Naive thymus-derived CD4-positive, alpha-beta T cell (primary cell): ENCODE measurements at regions of chr1 and their contacts with region 1.

Region 1: GRCh38 chr1:43763497-43763973 is 56.2 kb downstream of the ST3GAL3 start:
- DNase-seq: peak; percentile 13 to 54 (median 45)
- ATAC-seq: peak; percentile 82
- H3K4me3 ChIP-seq: no peak overlapping the region
- H3K4me3 Mint-ChIP-seq: no peak overlapping the region
- H3K27ac ChIP-seq: no peak overlapping the region
- H3K27ac Mint-ChIP-seq: no peak overlapping the region
- H3K4me1 ChIP-seq: no peaks in the 10 kb centered on the region
- H3K4me1 Mint-ChIP-seq: peaks cover 0 to 12% (median 4%) of the 10 kb centered on the region in 7 donors
- H3K27me3 ChIP-seq: no peaks in the 10 kb centered on the region
- H3K27me3 Mint-ChIP-seq: no peaks in the 10 kb centered on the region

Region 2: GRCh38 chr1:43934101-43934985 is 170.8 kb after region 1 on chr1:
- CTCF ChIA-PET with region 1: interaction called, 50 read pairs
- POLR2A ChIA-PET with region 1: no interaction called
- intact Hi-C with region 1: loop called (anchors 1 kb)
- DNase-seq: peak in 6 of 9 donors; percentile 29 to 68 (median 44)
- ATAC-seq: peak; percentile 82
- H3K4me3 ChIP-seq: no peak overlapping the region
- H3K4me3 Mint-ChIP-seq: peak overlapping the region in 8 of 10 donors; percentile 12 to 70 (median 46)
- H3K27ac ChIP-seq: no peak overlapping the region
- H3K27ac Mint-ChIP-seq: no peak overlapping the region
- H3K4me1 ChIP-seq: peaks cover 0 to 9% of the 10 kb centered on the region in 2 donors
- H3K4me1 Mint-ChIP-seq: peaks cover 10 to 29% (median 14%) of the 10 kb centered on the region in 7 donors
- H3K27me3 ChIP-seq: peaks cover 9 to 19% of the 10 kb centered on the region in 2 donors
- H3K27me3 Mint-ChIP-seq: peaks cover 21 to 29% (median 26%) of the 10 kb centered on the region in 5 donors

Region 3: DNA sequence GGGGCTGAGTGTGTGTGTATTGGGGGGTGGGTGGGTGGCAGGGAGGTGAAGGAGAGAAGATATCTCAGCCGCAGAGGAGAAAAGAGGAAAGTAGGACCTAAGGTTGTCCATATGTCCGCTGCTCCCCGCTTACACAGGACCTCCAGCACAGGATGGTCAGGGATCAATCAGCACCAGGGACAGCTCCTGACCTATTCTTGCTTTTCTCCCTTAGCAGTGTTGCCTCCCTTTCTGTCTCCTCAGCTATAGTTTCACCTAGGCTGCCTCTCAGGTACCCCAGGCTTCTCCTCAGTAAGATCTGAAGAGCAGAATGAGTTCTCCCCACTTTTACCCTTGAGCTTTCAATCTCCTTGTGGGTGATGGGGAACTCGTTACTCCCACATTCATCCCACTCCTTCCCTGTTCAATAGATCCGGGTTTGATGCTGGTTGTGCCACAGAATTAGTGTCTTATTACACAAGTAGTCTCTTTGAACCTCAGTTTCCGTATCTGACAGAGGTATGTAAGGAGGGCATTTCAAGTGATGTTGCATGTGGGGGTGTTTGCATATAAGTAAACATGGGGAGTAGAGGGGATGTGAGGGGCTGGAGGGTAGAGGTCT is 204.9 kb after region 1 on chr1:
- CTCF ChIA-PET with region 1: no interaction called
- POLR2A ChIA-PET with region 1: no interaction called
- intact Hi-C with region 1: loop called in 1 of 2 experiments (anchors 1 kb)
- DNase-seq: no peak
- ATAC-seq: no peak
- H3K4me3 ChIP-seq: no peak overlapping the region
- H3K4me3 Mint-ChIP-seq: no peak overlapping the region
- H3K27ac ChIP-seq: no peak overlapping the region
- H3K27ac Mint-ChIP-seq: peak overlapping the region in 1 of 9 donors; percentile 26
- H3K4me1 ChIP-seq: peaks cover 9 to 15% of the 10 kb centered on the region in 2 donors
- H3K4me1 Mint-ChIP-seq: peaks cover 15 to 31% (median 24%) of the 10 kb centered on the region in 7 donors
- H3K27me3 ChIP-seq: no peaks in the 10 kb centered on the region
- H3K27me3 Mint-ChIP-seq: no peaks in the 10 kb centered on the region

Region 4: DNA sequence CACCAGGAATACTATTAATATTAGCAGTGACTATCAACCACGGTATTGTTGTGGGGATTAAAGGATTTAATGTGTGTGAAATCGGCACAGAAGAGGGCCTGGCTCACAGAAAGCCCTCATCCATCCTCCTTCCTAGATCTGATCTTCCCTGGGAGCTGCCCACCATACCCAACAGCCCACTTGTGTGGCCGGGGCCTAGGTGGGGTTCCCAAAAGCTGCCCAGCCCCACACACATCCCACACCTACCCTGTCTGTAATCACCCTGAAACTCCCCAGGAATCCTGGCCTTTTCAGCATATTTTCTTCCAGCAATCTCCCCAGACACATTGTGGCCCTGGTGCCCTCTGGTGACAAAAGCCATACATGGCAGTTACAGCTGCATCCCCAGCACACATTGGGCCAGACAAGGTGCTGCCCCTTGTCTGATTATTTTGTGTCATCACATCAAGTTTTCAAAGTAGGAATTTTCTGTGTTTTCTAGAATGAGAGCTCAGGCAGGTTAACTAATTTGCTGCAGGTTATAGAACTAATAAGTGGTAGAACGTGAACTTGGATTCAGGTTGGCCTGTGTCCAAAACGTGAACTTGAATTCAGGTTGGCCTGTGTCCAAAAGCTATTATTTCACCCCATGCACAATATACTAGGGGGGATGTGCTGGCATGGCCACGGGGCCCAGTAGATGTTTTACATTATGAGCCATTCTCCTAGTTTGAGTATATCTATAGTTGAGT is 273.0 kb after region 1 on chr1:
- CTCF ChIA-PET with region 1: interaction called, 4 read pairs
- POLR2A ChIA-PET with region 1: no interaction called
- intact Hi-C with region 1: loop called in 1 of 2 experiments (anchors 1 kb)
- DNase-seq: peak; percentile 32 to 71 (median 58)
- ATAC-seq: peak; percentile 88
- H3K4me3 ChIP-seq: no peak overlapping the region
- H3K4me3 Mint-ChIP-seq: peak overlapping the region in 1 of 10 donors; percentile 1
- H3K27ac ChIP-seq: no peak overlapping the region
- H3K27ac Mint-ChIP-seq: peak overlapping the region in 1 of 9 donors; percentile 18
- H3K4me1 ChIP-seq: no peaks in the 10 kb centered on the region
- H3K4me1 Mint-ChIP-seq: peaks cover 0 to 19% (median 0%) of the 10 kb centered on the region in 7 donors
- H3K27me3 ChIP-seq: no peaks in the 10 kb centered on the region
- H3K27me3 Mint-ChIP-seq: peaks cover 0 to 12% (median 0%) of the 10 kb centered on the region in 5 donors